Dendritic cell treated with granulocyte-macrophage colony-stimulating factor and Interleukin-4, amounts not matched to agents 40 ng/mL and 50 ng/mL, for 4 days (primary cell): ENCODE measurements at regions of chr5 and their contacts with region 1.

Region 1: DNA sequence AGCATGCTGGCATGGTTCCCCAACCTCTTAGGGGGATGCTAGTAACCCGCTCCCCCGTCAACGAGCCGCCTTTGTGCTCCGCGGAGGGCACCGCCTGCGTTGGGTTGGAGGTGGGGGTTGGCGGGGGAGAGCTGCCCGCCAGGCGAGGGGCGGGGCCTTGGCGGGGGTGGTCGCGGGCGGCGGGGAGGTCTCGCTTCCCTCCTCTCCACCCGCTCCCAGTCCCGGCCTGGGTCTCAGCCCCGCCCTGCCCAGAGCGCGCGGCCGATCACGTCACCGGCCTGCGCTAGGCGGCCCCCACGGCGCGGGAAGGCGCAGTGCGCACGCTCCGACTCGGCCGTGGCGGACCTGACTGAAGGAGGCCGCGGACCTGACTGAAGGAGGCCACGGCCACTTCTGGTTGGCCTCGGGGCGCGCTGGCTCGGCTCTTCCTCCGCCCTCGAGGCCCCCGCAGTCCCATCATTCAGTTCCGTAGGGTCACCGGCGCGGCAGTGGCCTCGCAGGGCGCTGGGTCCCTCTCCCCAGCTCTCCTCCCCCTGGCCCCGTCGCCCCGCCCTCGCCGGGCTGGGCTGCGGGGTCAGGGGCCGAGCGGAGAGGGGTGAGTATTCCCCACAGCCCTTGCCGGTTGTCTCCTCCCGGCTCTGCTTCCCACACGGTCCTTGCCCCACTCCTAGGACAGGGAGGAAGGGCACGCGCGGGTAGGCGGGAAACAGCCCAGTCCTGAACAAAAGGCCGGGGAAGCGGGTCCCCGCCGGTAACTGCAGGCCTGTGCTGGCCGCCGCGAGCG is at the start of gene ATG10:
- H3K4me3 Mint-ChIP-seq: peak within 1 kb of the TSS; percentile 90
- H3K27ac Mint-ChIP-seq: peak within 1 kb of the TSS; percentile 97
- H3K4me1 Mint-ChIP-seq: peaks cover 11% of the 10 kb centered on the region
- H3K27me3 Mint-ChIP-seq: no peaks in the 10 kb centered on the region

Region 2: DNA sequence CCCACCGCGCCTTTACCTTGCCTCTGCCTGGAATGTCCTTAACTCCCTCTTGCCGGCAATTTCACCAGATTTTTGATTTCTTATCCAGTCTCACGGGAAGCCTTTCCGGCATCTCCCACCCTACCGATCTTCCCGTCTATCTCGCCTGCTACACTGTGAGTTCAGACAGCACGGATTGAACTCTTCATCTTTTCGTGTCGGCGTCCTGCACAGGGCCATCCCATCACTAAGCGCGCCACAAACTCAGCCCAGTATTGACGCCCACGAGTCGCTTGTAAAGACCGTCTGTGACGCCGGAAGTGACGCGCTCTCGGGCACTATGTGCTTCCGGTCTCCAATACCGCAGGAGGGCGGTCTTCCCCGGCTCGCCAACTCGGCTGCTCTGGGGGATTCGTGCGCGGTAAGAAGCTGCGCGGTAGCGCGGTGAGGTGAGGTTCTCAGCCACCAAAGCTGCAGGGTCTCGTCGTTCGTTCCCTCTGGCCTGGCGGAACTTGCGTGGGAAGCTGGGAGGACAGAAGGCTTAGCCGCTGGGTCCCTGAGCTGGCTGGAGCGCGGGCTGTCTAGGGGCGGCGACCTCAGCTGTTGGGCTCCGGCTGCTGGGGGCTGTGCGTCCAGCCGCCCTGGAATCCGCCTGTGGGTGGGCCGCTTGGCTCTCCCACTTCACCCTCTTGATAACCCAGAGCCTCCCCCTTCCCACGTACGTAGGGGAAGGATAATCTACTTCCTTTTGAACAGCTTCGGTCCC is 670.5 kb before region 1 on chr5 and contains the start of gene ZCCHC9:
- intact Hi-C with region 1: loop called (anchors 5 kb)
- H3K4me3 Mint-ChIP-seq: peak within 1 kb of the TSS; percentile 89
- H3K27ac Mint-ChIP-seq: peak within 1 kb of the TSS; percentile 88
- H3K4me1 Mint-ChIP-seq: peaks cover 35% of the 10 kb centered on the region
- H3K27me3 Mint-ChIP-seq: no peaks in the 10 kb centered on the region

Region 3: DNA sequence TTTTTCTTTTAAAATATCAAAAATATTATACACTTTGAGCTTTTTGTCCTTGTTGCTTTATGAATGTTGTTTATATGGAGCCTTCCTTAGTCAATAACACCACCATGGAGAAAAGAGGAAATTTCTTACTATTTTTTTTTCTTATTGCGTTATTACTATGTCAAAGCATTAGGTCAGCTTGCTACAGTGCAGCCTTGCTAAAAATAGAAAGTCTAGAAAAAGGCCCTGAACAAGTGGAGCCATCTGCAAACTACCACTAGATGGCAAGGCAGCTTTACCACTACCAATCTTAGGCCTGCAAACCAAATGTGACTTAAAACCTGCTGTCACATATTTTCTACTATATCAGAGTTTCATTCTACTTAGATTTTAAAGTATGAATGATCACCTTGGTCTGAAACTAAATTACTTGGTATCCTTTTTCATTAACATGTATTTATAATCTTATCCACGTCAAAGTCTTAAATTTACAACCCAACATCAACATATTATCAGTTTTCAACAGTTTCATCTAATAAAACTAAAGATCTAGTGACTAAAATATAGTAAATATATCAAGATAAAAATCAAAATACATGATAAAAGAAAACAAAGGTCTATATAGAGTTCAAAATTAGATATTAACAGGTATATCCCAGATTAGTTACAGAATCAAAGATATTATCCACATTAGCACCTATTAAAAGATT is 464.9 kb before region 1 on chr5:
- intact Hi-C with region 1: loop called (anchors 5 kb)
- H3K4me3 Mint-ChIP-seq: no peak overlapping the region
- H3K27ac Mint-ChIP-seq: no peak overlapping the region
- H3K4me1 Mint-ChIP-seq: peaks cover 1% of the 10 kb centered on the region
- H3K27me3 Mint-ChIP-seq: no peaks in the 10 kb centered on the region

Region 4: GRCh38 chr5:81558188-81558587 is 413.7 kb before region 1 on chr5:
- intact Hi-C with region 1: no loop called
- H3K4me3 Mint-ChIP-seq: no peak overlapping the region
- H3K27ac Mint-ChIP-seq: no peak overlapping the region
- H3K4me1 Mint-ChIP-seq: peaks cover 6% of the 10 kb centered on the region
- H3K27me3 Mint-ChIP-seq: no peaks in the 10 kb centered on the region

Region 5: GRCh38 chr5:81851481-81852178 is 120.3 kb before region 1 on chr5:
- intact Hi-C with region 1: loop called (anchors 2 kb)
- H3K4me3 Mint-ChIP-seq: peak overlapping the region; percentile 79
- H3K27ac Mint-ChIP-seq: peak overlapping the region; percentile 96
- H3K4me1 Mint-ChIP-seq: peaks cover 55% of the 10 kb centered on the region
- H3K27me3 Mint-ChIP-seq: no peaks in the 10 kb centered on the region

Region 6: DNA sequence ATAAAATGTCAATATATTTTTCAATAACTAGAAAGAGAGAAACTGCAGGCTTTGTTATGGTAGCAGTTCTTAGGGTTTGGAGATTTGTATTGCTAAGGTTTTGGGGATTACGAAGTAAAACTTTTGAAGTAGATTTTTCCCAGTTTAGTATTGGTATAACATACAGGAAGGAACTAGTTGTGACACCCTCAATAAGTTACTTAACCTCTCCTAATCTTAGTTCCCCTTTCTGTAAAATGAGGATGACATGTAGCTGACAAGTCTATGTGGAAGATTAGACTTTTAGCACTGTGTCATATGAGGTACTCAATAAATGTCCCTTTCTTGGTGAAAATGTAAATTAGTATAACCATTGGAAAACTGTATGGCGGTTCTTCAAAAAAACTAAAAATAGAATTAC is 73.5 kb before region 1 on chr5:
- intact Hi-C with region 1: loop called (anchors 5 kb)
- H3K4me3 Mint-ChIP-seq: no peak overlapping the region
- H3K27ac Mint-ChIP-seq: peak overlapping the region; percentile 63
- H3K4me1 Mint-ChIP-seq: peaks cover 38% of the 10 kb centered on the region
- H3K27me3 Mint-ChIP-seq: no peaks in the 10 kb centered on the region

Region 7: DNA sequence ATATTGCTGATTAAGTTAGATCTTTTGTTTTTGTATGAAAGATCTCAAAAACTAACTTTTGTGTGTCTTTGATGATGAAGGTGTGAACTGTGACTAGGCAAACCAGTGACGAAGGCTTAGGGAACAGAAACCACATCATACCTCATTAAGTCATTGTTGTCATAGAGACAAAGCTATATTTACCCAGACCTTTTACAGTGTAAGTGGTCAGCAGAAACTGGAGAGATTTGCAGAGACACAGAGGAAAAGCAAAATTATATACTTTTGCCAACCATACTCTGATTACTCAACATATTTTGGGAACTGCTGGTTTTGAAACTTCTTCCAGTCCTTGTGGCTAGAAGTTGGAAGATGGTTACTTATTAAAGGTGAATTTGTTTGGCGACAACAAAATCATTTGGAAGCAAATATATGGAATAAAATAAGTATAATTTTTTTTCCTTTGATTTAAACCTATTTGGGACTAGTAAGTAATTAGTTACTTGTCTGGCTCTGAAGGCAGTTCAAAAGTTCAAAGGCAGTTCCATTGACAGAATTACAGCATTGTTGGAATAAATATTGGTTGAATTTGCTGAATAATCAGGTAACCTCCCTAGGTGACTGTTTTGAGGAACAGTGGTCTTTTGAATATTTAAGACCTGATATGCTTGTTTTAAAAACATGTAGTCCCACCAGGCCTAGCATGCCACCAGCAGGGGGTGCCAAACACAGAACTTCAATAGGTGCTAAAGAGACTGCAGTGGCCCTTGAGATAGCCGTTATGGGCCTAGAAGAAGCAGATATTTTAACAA is 202.4 kb after region 1 on chr5:
- intact Hi-C with region 1: loop called (anchors 10 kb)
- H3K4me3 Mint-ChIP-seq: no peak overlapping the region
- H3K27ac Mint-ChIP-seq: peak overlapping the region; percentile 45
- H3K4me1 Mint-ChIP-seq: peaks cover 15% of the 10 kb centered on the region
- H3K27me3 Mint-ChIP-seq: no peaks in the 10 kb centered on the region

Region 8: DNA sequence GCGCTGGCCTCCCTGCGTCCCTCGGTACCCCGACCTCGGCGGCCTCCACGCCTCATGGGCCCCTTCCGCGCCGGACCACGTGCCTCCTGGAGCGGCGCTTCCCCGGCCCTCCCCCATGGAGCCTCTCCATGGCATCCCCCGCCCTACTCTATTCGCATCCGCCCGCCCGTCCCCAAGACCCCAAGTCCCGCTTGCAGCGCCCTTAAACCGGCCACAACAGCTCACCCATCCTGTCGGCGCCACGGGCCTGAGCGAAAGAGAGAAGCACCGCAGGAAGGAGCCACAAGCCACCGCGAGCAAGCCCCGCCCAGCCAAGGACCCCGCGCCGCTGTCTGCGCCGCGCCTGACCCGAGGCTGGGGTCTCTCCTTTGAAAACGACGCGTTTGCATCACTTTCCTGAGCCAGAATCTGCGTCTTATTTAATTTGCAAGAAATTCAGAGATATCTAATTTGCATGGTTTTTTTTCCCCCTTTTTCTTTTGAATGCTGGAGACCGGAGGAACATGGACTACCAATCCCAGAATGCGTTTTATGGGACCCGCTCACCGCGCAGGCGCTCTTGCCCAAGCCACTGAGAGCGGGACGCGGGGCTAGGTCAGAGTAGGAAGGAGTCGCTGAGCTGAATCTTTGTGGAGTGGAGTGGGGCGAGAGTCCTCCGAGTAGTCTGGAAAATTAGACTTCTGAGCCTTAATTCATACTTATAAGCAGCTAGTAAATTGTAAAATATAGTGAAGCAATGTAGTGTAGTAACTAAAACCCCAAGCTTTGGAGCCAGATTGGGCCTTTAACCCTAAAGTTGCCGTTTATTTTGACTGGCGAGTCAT is 306.4 kb after region 1 on chr5 and contains the start of gene RPS23:
- intact Hi-C with region 1: loop called (anchors 5 kb)
- H3K4me3 Mint-ChIP-seq: peak within 1 kb of the TSS; percentile 90
- H3K27ac Mint-ChIP-seq: peak within 1 kb of the TSS; percentile 99
- H3K4me1 Mint-ChIP-seq: peaks cover 28% of the 10 kb centered on the region
- H3K27me3 Mint-ChIP-seq: no peaks in the 10 kb centered on the region